ENCODE measurements at regions of chr4 and their contacts with region 1.

Region 1: DNA sequence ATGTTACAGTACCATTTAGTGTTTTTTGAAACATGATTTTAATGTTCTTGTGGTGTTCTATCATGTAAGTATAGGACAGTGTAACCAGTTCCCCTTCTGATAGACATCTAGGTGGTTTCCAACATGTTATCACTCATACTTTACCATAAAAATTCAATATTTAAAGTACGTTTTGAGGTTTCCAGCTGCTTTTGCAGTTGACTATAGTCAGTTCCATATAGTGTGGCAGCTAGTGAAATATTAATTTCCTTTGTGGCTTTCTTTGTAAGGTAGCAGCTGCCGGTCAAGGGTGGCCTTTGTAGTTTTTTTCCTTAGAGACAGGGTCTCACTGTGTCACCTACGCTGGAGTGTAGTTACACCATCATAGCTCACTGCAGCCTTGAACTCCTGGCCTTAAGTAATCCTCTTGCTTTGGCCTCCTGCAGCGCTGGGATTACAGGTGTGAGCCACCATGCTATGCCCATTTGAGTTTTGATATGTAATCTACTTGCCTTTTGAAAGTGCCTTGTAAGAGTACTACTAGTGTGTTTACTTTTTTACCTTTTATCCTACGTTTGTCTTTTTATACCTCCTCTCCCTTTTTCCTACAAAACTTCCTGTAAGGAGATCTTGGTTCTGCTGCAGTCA is 63.0 kb downstream of the ARHGAP10 start:
- DNase-seq: no peak
- ATAC-seq: no peak
- H3K4me3 ChIP-seq: no peak overlapping the region
- H3K27ac ChIP-seq: peak overlapping the region; percentile 1
- H3K4me1 ChIP-seq: peaks cover 46% of the 10 kb centered on the region
- H3K27me3 ChIP-seq: no peaks in the 10 kb centered on the region
- CTCF ChIP-seq: no peak

Region 2: GRCh38 chr4:147809211-147809610 is 14.3 kb after region 1 on chr4:
- intact Hi-C with region 1: loop called in 1 of 2 experiments (anchors 1 kb)
- DNase-seq: no peak
- ATAC-seq: no peak
- H3K4me3 ChIP-seq: no peak overlapping the region
- H3K27ac ChIP-seq: no peak overlapping the region
- H3K4me1 ChIP-seq: peaks cover 54% of the 10 kb centered on the region
- H3K27me3 ChIP-seq: no peaks in the 10 kb centered on the region
- CTCF ChIP-seq: no peak